Activated B cell treated with CpG ODN at 0.5 μM for 24 hours (primary cell): ENCODE measurements at regions of chr13 and their contacts with region 1.

Region 1: DNA sequence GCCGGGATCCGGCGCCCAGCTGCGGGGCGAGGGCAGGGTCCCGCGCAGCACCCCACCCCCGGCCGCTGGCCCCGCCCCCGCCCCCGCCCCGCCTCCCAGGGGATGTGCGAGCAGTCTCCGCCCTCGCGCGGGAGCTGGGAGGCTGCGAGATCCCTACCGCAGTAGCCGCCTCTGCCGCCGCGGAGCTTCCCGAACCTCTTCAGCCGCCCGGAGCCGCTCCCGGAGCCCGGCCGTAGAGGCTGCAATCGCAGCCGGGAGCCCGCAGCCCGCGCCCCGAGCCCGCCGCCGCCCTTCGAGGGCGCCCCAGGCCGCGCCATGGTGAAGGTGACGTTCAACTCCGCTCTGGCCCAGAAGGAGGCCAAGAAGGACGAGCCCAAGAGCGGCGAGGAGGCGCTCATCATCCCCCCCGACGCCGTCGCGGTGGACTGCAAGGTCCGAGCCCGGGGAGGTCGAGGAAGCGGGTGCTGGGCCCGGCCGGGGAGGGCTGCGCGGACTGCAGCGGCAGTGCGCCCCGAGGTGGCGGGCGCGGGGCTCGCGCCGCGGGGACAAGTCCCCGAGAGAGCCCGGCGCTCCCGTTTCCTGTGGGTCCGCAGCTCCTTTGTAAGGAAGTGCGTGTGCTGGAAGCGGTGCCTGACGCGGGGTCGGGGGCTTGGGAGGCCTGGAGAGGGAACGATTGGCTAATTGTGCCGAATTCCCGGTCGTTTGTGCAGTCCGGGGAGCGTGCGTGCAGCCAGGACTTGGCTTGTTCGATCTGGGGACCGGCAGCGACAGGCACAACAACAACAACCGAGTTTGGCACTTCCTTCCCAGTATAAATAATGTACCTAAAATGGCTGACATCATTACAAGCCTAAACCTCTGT is at the start of gene ITM2B:
- DNase-seq: peak; percentile 65
- ATAC-seq: peak; percentile 76
- H3K4me3 Mint-ChIP-seq: peak within 1 kb of the TSS; percentile 93
- H3K27ac Mint-ChIP-seq: peak within 1 kb of the TSS; percentile 87
- H3K4me1 Mint-ChIP-seq: peaks cover 54% of the 10 kb centered on the region
- H3K27me3 Mint-ChIP-seq: peaks cover 7% of the 10 kb centered on the region
- CTCF ChIP-seq: no peak
- total RNA-seq, gene ITM2B: 102 and 114 TPM in 2 replicates

Region 2: DNA sequence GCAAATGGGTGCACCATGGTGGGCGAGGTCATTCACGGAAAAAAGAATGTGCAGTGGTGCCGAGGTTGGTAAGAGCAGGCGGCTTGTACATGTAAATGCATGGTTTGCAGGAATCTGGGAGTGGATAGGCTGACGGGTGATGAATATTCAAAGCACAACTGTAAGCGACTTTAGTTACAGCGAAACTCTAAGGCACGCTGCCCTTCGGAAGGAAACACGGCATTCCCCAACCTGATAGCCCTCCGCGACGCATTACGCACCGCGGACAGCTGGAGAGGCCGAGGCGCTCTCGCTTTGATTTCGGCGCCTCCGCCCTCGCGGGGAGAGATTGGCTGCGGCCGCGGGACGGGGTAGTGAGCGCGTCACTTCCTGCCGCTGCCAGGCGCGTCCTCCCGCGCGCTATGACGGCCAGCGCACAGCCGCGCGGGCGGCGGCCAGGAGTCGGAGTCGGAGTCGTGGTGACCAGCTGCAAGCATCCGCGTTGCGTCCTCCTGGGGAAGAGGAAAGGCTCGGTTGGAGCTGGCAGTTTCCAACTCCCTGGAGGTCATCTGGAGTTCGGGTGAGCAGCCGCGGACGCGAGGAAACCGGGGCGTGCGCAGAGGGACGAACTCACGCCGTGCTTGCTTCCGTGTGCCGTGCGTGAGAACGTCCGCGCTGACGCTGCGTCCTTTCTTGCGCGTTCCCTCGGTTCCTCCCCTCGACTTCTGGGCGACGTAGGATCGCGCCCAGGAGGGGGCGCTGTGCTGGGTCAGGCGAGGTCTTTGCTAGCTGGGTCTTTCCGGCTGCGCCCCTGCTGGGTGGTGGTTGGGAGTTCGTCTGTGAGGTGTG is 195.7 kb before region 1 on chr13 and contains the start of gene NUDT15:
- CTCF ChIA-PET with region 1: no interaction called
- POLR2A ChIA-PET with region 1: interaction called, 5 read pairs
- intact Hi-C with region 1: loop called (anchors 2 kb)
- DNase-seq: peak; percentile 92
- ATAC-seq: peak; percentile 94
- H3K4me3 Mint-ChIP-seq: peak within 1 kb of the TSS; percentile 93
- H3K27ac Mint-ChIP-seq: peak within 1 kb of the TSS; percentile 96
- H3K4me1 Mint-ChIP-seq: peaks cover 29% of the 10 kb centered on the region
- H3K27me3 Mint-ChIP-seq: no peaks in the 10 kb centered on the region
- CTCF ChIP-seq: peak; percentile 83
- total RNA-seq, gene NUDT15: 5.5 and 6.2 TPM in 2 replicates

Region 3: GRCh38 chr13:48184260-48184659 is 49.0 kb before region 1 on chr13:
- CTCF ChIA-PET with region 1: interaction called, 3 read pairs
- POLR2A ChIA-PET with region 1: interaction called, 10 read pairs
- intact Hi-C with region 1: loop called (anchors 2 kb)
- DNase-seq: no peak
- ATAC-seq: no peak
- H3K4me3 Mint-ChIP-seq: peak overlapping the region; percentile 21
- H3K27ac Mint-ChIP-seq: peak overlapping the region; percentile 61
- H3K4me1 Mint-ChIP-seq: peaks cover 66% of the 10 kb centered on the region
- H3K27me3 Mint-ChIP-seq: no peaks in the 10 kb centered on the region
- CTCF ChIP-seq: no peak

Region 4: DNA sequence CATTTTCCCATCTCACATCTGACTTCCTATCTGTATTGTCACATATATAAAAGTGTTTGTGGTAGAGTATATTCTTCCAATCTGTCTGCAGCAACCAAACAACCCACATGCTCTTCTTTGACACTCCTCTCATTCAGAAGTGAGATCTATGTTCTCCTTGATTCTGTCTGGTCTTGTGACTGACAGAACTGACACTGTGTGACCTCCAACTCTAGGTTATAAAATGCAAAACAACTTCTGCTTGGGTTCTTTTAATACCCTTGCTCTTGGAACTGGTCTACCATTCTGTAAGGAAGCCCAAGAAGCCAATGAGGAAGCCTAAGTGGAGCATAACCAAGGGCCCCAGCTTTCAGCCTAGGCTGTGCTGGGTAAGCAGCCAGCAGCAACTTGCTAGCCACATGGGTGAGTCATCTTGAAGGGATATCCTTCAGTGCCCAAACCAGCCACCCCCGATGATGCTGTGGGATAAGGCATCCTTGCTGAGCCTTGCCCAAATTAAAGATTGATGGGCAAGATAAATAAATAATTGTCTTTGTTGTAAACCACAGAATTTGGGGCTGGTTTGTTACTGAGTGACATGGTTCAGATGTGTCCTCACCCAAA is 18.7 kb before region 1 on chr13:
- CTCF ChIA-PET with region 1: no interaction called
- POLR2A ChIA-PET with region 1: no interaction called
- intact Hi-C with region 1: no loop called
- DNase-seq: no peak
- ATAC-seq: no peak
- H3K4me3 Mint-ChIP-seq: no peak overlapping the region
- H3K27ac Mint-ChIP-seq: no peak overlapping the region
- H3K4me1 Mint-ChIP-seq: no peaks in the 10 kb centered on the region
- H3K27me3 Mint-ChIP-seq: peaks cover 3% of the 10 kb centered on the region
- CTCF ChIP-seq: no peak

Region 5: DNA sequence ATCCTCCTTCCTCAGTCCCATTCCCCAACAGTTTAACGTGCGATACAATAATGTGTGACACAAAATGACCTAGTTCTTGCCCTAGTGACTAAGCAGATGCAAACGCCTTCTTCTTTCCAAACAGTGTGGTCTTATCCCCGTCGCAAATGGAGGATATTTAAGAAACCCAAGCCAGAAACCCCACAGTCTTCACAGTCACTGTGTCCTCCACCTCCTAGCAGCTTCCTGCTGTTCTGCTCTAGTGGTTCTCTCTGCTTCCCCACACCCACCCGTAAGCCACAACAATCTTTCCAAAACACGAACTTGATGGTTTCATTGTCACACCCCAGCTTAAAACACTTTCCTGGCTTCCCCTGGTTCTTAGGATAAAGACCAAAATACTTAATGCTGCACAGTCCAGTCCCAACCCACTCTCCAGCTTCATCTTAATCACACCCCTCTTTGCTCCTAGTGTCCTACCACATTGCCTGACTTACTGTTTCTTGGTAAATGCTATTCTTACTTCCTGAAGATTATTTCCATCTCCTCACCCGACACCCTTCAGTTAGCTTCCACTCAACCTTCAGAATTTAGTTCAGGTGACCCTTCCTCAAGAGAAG is 32.0 kb after region 1 on chr13:
- CTCF ChIA-PET with region 1: interaction called, 3 read pairs
- POLR2A ChIA-PET with region 1: interaction called, 3 read pairs
- intact Hi-C with region 1: loop called (anchors 2 kb)
- DNase-seq: peak; percentile 23
- ATAC-seq: peak; percentile 86
- H3K4me3 Mint-ChIP-seq: peak overlapping the region; percentile 75
- H3K27ac Mint-ChIP-seq: peak overlapping the region; percentile 85
- H3K4me1 Mint-ChIP-seq: peaks cover 52% of the 10 kb centered on the region
- H3K27me3 Mint-ChIP-seq: no peaks in the 10 kb centered on the region
- CTCF ChIP-seq: no peak

Region 6: DNA sequence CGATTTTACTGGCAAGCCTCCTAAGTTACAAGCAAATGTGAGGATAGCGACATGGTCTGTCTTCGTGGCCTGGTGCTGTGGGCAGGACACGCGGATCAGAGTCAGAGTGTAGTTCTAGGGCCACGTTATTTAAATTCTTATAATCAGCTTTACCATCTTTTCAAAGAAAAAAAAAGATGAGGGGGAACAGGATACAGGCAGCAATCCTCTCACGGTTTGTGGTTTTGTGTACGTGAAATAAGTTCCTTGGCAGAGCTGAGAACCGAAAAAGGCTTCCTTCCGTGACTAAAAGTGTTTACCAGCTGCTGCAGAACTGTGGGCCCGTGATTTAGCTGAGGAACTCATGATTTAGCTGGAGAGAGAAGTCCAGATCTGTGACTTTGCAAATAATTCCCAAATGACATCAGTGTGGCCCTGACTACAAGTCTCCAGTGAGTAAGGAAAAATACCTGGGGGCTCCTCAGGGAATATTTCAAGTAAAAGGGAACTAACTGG is 272.4 kb after region 1 on chr13:
- CTCF ChIA-PET with region 1: no interaction called
- POLR2A ChIA-PET with region 1: interaction called, 3 read pairs
- intact Hi-C with region 1: loop called (anchors 5 kb)
- DNase-seq: no peak
- ATAC-seq: peak; percentile 85
- H3K4me3 Mint-ChIP-seq: peak overlapping the region; percentile 75
- H3K27ac Mint-ChIP-seq: peak overlapping the region; percentile 59
- H3K4me1 Mint-ChIP-seq: peaks cover 55% of the 10 kb centered on the region
- H3K27me3 Mint-ChIP-seq: peaks cover 20% of the 10 kb centered on the region
- CTCF ChIP-seq: no peak

Region 7: GRCh38 chr13:48975856-48976575 is 742.7 kb after region 1 on chr13 and contains the start of gene FNDC3A:
- CTCF ChIA-PET with region 1: no interaction called
- POLR2A ChIA-PET with region 1: no interaction called
- intact Hi-C with region 1: loop called (anchors 5 kb)
- DNase-seq: peak; percentile 82
- ATAC-seq: peak; percentile 77
- H3K4me3 Mint-ChIP-seq: peak within 1 kb of the TSS; percentile 95
- H3K27ac Mint-ChIP-seq: peak within 1 kb of the TSS; percentile 98
- H3K4me1 Mint-ChIP-seq: peaks cover 47% of the 10 kb centered on the region
- H3K27me3 Mint-ChIP-seq: no peaks in the 10 kb centered on the region
- CTCF ChIP-seq: no peak
- total RNA-seq, gene FNDC3A: 30.3 and 34.1 TPM in 2 replicates